Spleen (tissue), 13 donors: ENCODE measurements at regions of chrX and their contacts with region 1.

Region 1: DNA sequence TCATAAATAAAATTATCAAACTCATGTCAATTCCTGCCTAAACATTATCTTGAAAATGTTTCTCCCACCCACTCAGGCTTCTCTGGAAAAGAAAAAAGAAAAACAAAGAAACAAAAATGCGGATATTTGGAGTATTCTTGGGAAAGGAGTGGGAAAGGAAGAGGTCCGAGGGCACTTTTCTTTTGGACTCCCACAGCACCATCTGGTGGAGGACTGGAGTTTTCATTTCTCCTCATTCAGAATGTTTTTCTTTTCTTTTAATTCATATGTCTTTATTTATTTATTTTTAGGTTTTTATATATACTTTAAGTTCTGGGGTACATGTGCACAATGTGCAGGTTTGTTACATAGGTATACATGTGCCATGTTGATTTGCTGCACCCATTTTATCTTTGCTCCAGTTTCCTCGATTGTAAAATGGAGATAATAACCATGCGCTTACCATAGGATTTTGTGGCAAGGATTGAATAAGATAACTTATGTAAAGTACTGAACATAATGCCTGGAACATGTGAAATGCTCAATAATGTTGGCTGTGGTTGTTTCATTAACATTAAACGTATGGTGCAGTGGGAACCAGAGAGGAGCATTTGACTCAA is 8.0 kb upstream of the KCNE5 start:
- DNase-seq: no peak
- H3K4me3 ChIP-seq: no peak overlapping the region
- H3K27ac ChIP-seq: no peak overlapping the region
- H3K4me1 ChIP-seq: no peaks in the 10 kb centered on the region
- H3K27me3 ChIP-seq: no peaks in the 10 kb centered on the region
- CTCF ChIP-seq: peak in 8 of 11 experiments; percentile 25 to 44 (median 34)
- POLR2A ChIP-seq: no peak

Region 2: GRCh38 chrX:109485470-109486340 is 147.3 kb before region 1 on chrX:
- intact Hi-C with region 1: loop called (anchors 5 kb)
- DNase-seq: peak; percentile 83
- H3K4me3 ChIP-seq: no peak overlapping the region
- H3K27ac ChIP-seq: no peak overlapping the region
- H3K4me1 ChIP-seq: peaks cover 0 to 17% (median 0%) of the 10 kb centered on the region in 6 donors
- H3K27me3 ChIP-seq: peaks cover 0 to 10% (median 0%) of the 10 kb centered on the region in 7 donors
- CTCF ChIP-seq: peak; percentile 86 to 97 (median 91)
- POLR2A ChIP-seq: no peak